ENCODE measurements at regions of chr1 and their contacts with region 1.

Region 1: DNA sequence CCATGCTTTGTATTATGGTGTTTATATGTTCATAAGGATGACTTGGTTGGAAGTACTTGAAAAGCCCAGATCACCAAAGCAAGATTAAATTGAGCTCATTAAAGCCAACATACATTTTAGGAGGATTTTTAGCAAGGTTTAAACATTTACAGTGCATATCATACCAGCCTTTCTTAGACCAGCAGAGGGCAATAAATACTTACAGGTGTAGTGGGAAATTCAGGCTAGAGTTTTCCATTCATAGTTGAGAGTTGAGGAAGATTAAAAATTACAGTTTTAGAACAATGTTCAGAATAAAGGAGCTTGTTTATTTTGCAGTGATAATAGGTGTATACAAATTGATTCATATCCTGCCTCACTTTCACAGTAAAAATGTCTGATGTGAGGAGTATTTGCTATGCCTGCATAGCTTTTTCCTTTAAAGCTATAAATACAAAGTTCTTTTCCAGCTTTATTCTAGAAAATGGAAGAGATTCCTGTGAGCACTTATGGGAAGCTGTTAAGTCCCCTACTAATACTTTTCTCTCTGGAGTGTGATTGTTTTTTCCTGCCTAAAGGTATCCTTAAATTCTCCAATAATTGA is 35.3 kb downstream of the DTL start:
- DNase-seq: peak; percentile 72
- H3K4me3 Mint-ChIP-seq: no peak overlapping the region
- H3K27ac Mint-ChIP-seq: peak overlapping the region; percentile 13
- H3K4me1 Mint-ChIP-seq: no peaks in the 10 kb centered on the region
- H3K27me3 Mint-ChIP-seq: no peaks in the 10 kb centered on the region
- CTCF ChIP-seq: peak; percentile 97

Region 2: GRCh38 chr1:211680752-211681327 is 390.0 kb before region 1 on chr1:
- CTCF ChIA-PET with region 1: interaction called, 12 read pairs
- POLR2A ChIA-PET with region 1: interaction called, 3 read pairs
- intact Hi-C with region 1: loop called (anchors 1 kb)
- DNase-seq: peak; percentile 92
- H3K4me3 Mint-ChIP-seq: no peak overlapping the region
- H3K27ac Mint-ChIP-seq: peak overlapping the region; percentile 24
- H3K4me1 Mint-ChIP-seq: peaks cover 8% of the 10 kb centered on the region
- H3K27me3 Mint-ChIP-seq: no peaks in the 10 kb centered on the region
- CTCF ChIP-seq: peak; percentile 99

Region 3: GRCh38 chr1:211843018-211843417 is 227.8 kb before region 1 on chr1:
- CTCF ChIA-PET with region 1: no interaction called
- POLR2A ChIA-PET with region 1: no interaction called
- intact Hi-C with region 1: no loop called
- DNase-seq: peak; percentile 38
- H3K4me3 Mint-ChIP-seq: no peak overlapping the region
- H3K27ac Mint-ChIP-seq: no peak overlapping the region
- H3K4me1 Mint-ChIP-seq: peaks cover 10% of the 10 kb centered on the region
- H3K27me3 Mint-ChIP-seq: no peaks in the 10 kb centered on the region
- CTCF ChIP-seq: no peak

Region 4: GRCh38 chr1:212053993-212054392 is 16.8 kb before region 1 on chr1:
- CTCF ChIA-PET with region 1: interaction called, 88 read pairs
- POLR2A ChIA-PET with region 1: no interaction called
- intact Hi-C with region 1: no loop called
- DNase-seq: no peak
- H3K4me3 Mint-ChIP-seq: no peak overlapping the region
- H3K27ac Mint-ChIP-seq: no peak overlapping the region
- H3K4me1 Mint-ChIP-seq: peaks cover 12% of the 10 kb centered on the region
- H3K27me3 Mint-ChIP-seq: no peaks in the 10 kb centered on the region
- CTCF ChIP-seq: no peak

Region 5: DNA sequence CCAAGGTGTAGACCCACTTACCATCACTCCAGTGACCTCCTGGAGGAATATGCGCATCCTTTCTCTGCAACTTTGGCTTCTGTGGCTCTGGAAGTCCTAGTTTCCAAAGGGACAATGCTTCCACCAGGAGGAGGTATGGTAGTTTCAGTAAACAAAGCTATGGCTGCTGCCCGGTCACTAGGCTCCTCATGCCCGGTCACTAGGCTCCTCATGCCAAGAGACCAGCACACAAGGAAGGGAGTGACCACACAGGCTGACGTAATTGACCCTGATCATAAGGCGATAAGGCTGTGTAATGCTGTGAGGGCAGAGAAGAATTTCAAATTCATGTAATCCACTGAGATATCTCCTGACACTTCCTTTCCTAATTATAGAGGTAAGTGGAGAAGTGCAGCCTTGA is 67.6 kb after region 1 on chr1:
- CTCF ChIA-PET with region 1: interaction called, 10 read pairs
- POLR2A ChIA-PET with region 1: no interaction called
- intact Hi-C with region 1: no loop called
- DNase-seq: no peak
- H3K4me3 Mint-ChIP-seq: no peak overlapping the region
- H3K27ac Mint-ChIP-seq: no peak overlapping the region
- H3K4me1 Mint-ChIP-seq: peaks cover 16% of the 10 kb centered on the region
- H3K27me3 Mint-ChIP-seq: no peaks in the 10 kb centered on the region
- CTCF ChIP-seq: no peak

Region 6: GRCh38 chr1:212291505-212292134 is 220.8 kb after region 1 on chr1:
- CTCF ChIA-PET with region 1: interaction called, 278 read pairs
- POLR2A ChIA-PET with region 1: interaction called, 74 read pairs
- intact Hi-C with region 1: loop called (anchors 1 kb)
- DNase-seq: peak; percentile 85
- H3K4me3 Mint-ChIP-seq: no peak overlapping the region
- H3K27ac Mint-ChIP-seq: peak overlapping the region; percentile 25
- H3K4me1 Mint-ChIP-seq: peaks cover 54% of the 10 kb centered on the region
- H3K27me3 Mint-ChIP-seq: no peaks in the 10 kb centered on the region
- CTCF ChIP-seq: peak; percentile 80

Region 7: GRCh38 chr1:212368073-212368484 is 297.3 kb after region 1 on chr1:
- CTCF ChIA-PET with region 1: interaction called, 340 read pairs
- POLR2A ChIA-PET with region 1: interaction called, 34 read pairs
- intact Hi-C with region 1: loop called (anchors 1 kb)
- DNase-seq: peak; percentile 93
- H3K4me3 Mint-ChIP-seq: no peak overlapping the region
- H3K27ac Mint-ChIP-seq: peak overlapping the region; percentile 5
- H3K4me1 Mint-ChIP-seq: peaks cover 15% of the 10 kb centered on the region
- H3K27me3 Mint-ChIP-seq: no peaks in the 10 kb centered on the region
- CTCF ChIP-seq: peak; percentile 99

Region 8: DNA sequence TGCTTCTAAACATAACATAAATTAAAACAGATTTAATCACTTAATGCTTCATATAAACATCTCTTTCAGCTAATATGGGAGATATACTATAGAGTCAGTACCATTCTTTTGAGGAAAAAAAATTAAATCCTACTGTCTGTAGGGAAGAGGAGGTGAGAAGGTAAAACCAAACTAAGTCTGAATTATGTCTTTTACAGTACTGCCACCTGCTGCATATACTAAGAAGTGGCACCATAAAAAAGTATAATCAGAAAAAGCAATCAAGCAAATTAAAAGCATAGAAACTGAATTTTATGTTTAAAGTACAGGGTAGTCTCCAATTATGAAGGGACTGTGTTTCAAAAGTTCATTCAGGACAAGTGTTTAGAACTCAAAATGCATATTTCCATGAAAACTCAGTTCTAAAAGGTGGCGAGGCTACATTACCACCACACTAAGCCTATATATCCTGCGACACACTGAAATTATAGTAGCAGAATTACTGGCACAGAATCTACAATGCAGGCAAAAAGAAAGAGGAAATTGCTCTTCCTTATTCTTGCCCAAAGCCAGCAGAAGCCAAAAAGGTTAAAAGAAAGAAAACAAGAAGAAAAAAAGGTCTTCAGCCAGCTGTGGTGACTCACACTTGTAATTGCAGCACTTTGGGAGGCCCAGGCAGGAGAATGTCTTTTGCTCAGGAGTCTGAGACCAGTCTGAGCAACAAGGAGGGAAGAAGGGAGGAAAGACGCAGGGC is 711.8 kb after region 1 on chr1:
- CTCF ChIA-PET with region 1: interaction called, 8 read pairs
- POLR2A ChIA-PET with region 1: no interaction called
- intact Hi-C with region 1: loop called (anchors 5 kb)
- DNase-seq: peak; percentile 58
- H3K4me3 Mint-ChIP-seq: no peak overlapping the region
- H3K27ac Mint-ChIP-seq: peak overlapping the region; percentile 57
- H3K4me1 Mint-ChIP-seq: peaks cover 7% of the 10 kb centered on the region
- H3K27me3 Mint-ChIP-seq: no peaks in the 10 kb centered on the region
- CTCF ChIP-seq: peak; percentile 84

Measured in MCF 10A (cell line).